Activated naive CD8-positive, alpha-beta T cell treated with anti-CD3 and anti-CD28 coated beads, Interleukin-2, amount 10 ng/mL, durations not matched to agents 7 days and 5 days (primary cell): ENCODE measurements at regions of chr18 and their contacts with region 1.

Region 1: GRCh38 chr18:36129300-36130038 is at the starts of genes ELP2 and SLC39A6:
- DNase-seq: peak; percentile 97
- ATAC-seq: peak; percentile 89
- H3K4me3 Mint-ChIP-seq: peak within 1 kb of the TSS; percentile 93
- H3K27ac Mint-ChIP-seq: peak within 1 kb of the TSS; percentile 95
- H3K4me1 Mint-ChIP-seq: peaks cover 30% of the 10 kb centered on the region
- H3K27me3 Mint-ChIP-seq: no peaks in the 10 kb centered on the region
- total RNA-seq, gene ELP2: 82.4 to 87.4 TPM
- total RNA-seq, gene SLC39A6: 18.4 to 20.4 TPM

Region 2: DNA sequence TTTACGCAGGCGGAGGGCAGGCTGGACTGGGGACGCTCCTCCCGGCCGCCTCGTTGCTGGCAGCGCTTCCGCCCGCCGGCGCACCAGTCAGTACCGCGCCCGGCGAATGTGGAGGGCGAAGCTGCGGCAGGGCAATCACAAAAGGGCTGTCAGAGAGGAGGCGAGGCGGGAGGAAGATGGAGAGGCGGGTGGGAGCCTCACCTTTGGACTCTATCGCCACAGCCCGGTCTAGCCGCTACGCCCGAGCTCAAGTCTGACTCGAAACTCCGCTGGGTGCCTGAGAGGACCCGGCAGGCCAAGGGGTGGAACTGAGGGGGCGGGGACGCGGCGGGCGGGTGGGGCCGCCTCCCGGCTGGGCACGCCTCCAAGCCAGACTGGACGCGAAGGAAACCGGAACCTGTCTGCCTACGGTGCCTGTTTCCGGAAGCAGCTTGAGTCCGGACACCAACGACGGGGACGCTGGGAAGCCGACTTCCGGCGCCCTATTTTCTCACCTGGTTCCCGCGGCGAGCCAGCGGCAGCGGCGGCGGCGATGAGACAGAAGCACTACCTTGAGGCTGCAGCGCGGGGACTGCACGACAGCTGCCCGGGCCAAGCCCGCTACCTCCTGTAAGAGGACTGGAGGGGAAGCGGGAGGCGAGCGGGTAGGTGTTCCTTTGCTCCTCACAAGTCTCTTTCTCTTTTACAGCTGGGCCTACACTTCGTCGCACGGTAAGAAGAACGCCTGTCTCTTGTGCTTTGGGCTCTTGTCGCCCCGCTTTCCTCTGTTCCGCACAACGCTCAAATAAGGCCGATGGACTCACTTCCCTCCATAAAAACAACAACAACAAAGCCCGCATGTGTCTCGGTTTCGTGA is 157.0 kb before region 1 on chr18 and contains the start of gene RMP24:
- POLR2A ChIA-PET with region 1: interaction called, 12 read pairs
- DNase-seq: peak; percentile 92
- ATAC-seq: peak; percentile 90
- H3K4me3 Mint-ChIP-seq: peak within 1 kb of the TSS; percentile 89
- H3K27ac Mint-ChIP-seq: peak within 1 kb of the TSS; percentile 93
- H3K4me1 Mint-ChIP-seq: peaks cover 35% of the 10 kb centered on the region
- H3K27me3 Mint-ChIP-seq: no peaks in the 10 kb centered on the region

Region 3: GRCh38 chr18:36095936-36096519 is 33.4 kb before region 1 on chr18:
- POLR2A ChIA-PET with region 1: no interaction called
- DNase-seq: no peak
- ATAC-seq: no peak
- H3K4me3 Mint-ChIP-seq: no peak overlapping the region
- H3K27ac Mint-ChIP-seq: no peak overlapping the region
- H3K4me1 Mint-ChIP-seq: peaks cover 2% of the 10 kb centered on the region
- H3K27me3 Mint-ChIP-seq: peaks cover 20% of the 10 kb centered on the region

Region 4: GRCh38 chr18:36114301-36114700 is 15.2 kb before region 1 on chr18:
- POLR2A ChIA-PET with region 1: no interaction called
- DNase-seq: no peak
- ATAC-seq: no peak
- H3K4me3 Mint-ChIP-seq: no peak overlapping the region
- H3K27ac Mint-ChIP-seq: no peak overlapping the region
- H3K4me1 Mint-ChIP-seq: peaks cover 1% of the 10 kb centered on the region
- H3K27me3 Mint-ChIP-seq: no peaks in the 10 kb centered on the region